CD4-positive, alpha-beta memory T cell (primary cell): ENCODE measurements at regions of chr17 and their contacts with region 1.

Region 1: GRCh38 chr17:7687908-7688807 is at the start of gene WRAP53:
- DNase-seq: peak; percentile 95 to 97 (median 96)
- H3K4me3 ChIP-seq: peak within 1 kb of the TSS; percentile 100
- H3K4me3 Mint-ChIP-seq: peak within 1 kb of the TSS; percentile 93 to 98 (median 96)
- H3K27ac ChIP-seq: peak within 1 kb of the TSS; percentile 99
- H3K27ac Mint-ChIP-seq: peak within 1 kb of the TSS; percentile 98 to 100 (median 99)
- H3K4me1 ChIP-seq: peaks cover 40% of the 10 kb centered on the region
- H3K4me1 Mint-ChIP-seq: peaks cover 18 to 53% (median 40%) of the 10 kb centered on the region in 4 donors
- H3K27me3 ChIP-seq: no peaks in the 10 kb centered on the region
- H3K27me3 Mint-ChIP-seq: no peaks in the 10 kb centered on the region
- total RNA-seq, gene WRAP53: 11.9 to 12.5 TPM

Region 2: DNA sequence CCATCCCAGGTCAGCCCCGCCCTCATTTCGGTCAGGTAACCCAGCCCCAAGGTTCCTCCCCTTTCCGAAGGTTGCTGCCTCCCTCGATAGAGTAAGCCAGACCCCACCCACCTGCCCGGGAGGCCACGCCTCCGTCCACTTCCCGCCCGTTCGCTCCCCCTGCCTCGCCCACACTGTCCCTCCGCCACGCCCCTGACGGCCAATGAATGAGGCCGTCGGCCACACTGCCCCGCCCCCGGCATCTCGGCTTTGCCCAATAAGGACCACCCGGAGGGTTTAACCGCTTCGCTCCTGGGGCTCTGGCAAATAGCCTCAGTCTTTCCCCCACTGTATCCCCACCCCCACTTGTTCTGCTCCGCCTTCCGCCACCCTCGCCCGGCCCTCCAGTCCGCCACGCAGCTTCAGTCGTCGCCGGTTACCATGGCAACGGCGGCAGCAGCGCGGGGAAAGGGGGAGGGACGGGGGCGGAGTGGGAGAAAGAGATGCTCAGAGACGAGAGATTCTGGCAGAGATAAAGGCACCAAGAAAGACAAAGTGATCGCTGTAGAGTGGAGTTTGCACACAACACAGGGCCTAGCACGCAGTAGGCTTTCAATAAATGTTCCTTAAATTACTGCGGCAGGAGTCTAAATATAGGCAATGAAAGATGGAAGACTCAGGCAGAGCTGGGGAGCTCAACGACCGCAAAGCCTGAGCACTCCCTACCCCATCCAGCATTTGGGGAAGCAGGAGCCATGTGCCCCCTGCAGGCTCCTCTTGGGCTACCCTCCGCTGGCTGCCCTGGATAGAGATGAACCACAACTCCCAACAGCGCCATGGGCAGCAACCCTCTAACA is 473.6 kb before region 1 on chr17:
- CTCF ChIA-PET with region 1: no interaction called
- POLR2A ChIA-PET with region 1: no interaction called
- intact Hi-C with region 1: loop called (anchors 1 kb)
- DNase-seq: peak; percentile 97 to 99 (median 98)
- H3K4me3 ChIP-seq: peak overlapping the region; percentile 68 to 73
- H3K4me3 Mint-ChIP-seq: peak overlapping the region; percentile 90 to 98 (median 93)
- H3K27ac ChIP-seq: peak overlapping the region; percentile 96
- H3K27ac Mint-ChIP-seq: peak overlapping the region; percentile 98 to 100 (median 100)
- H3K4me1 ChIP-seq: peaks cover 54% of the 10 kb centered on the region
- H3K4me1 Mint-ChIP-seq: peaks cover 26 to 67% (median 43%) of the 10 kb centered on the region in 4 donors
- H3K27me3 ChIP-seq: no peaks in the 10 kb centered on the region
- H3K27me3 Mint-ChIP-seq: peaks cover 0 to 13% of the 10 kb centered on the region in 2 donors

Region 3: DNA sequence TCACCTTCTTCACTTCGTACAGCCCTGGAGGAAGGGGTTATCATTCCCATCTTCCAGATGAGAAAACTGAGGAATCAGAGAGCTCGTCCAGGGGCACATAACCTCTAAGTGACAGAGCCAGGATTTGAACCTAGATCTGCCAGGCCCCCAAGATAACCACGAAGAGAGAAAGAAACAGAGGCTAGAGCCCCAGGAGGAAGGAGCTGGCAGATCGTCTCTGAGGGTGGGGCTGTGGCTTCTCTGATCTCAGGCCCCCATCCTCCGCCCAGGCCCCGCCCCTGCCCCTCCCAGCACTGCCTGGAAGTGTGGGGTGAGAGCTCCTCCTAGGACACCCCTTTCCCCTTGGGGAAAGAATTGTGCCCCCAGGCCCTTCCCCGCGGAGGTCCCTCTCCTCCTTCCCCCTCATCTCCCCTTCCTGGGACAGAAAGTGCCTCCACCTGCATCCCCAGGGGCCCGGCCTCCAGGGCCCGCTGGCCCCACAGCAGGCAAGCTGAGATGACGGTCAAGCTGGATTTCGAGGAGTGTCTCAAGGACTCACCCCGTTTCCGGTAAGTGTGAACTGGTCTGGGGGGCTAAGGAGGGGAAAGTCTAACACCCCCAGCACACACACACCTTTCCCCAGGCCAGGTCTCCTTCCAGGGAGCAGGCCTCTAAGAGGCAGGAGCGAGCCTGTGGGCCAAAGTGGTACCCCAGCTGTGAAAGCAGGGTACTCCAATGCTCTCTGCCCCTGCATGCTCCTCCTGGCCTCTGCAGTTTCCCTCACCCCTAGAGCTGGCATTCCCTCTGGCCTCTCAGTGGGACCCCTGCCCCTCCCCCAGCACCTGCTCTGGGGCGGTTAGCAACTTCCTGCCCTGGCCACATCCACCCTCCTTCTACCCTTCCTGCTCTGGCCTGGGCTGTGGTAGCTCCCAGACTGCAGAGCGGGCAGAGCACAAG is 351.6 kb before region 1 on chr17 and contains the start of gene ACAP1:
- CTCF ChIA-PET with region 1: interaction called, 5 read pairs
- POLR2A ChIA-PET with region 1: interaction called, 12 read pairs
- intact Hi-C with region 1: no loop called
- DNase-seq: peak; percentile 78 to 90 (median 81)
- H3K4me3 ChIP-seq: peak within 1 kb of the TSS; percentile 94 to 98
- H3K4me3 Mint-ChIP-seq: peak within 1 kb of the TSS; percentile 88 to 99 (median 98)
- H3K27ac ChIP-seq: peak within 1 kb of the TSS; percentile 74
- H3K27ac Mint-ChIP-seq: peak within 1 kb of the TSS; percentile 89 to 99 (median 97)
- H3K4me1 ChIP-seq: peaks cover 81% of the 10 kb centered on the region
- H3K4me1 Mint-ChIP-seq: peaks cover 38 to 75% (median 56%) of the 10 kb centered on the region in 4 donors
- H3K27me3 ChIP-seq: no peaks in the 10 kb centered on the region
- H3K27me3 Mint-ChIP-seq: no peaks in the 10 kb centered on the region
- total RNA-seq, gene ACAP1: 507 to 516 TPM

Region 4: DNA sequence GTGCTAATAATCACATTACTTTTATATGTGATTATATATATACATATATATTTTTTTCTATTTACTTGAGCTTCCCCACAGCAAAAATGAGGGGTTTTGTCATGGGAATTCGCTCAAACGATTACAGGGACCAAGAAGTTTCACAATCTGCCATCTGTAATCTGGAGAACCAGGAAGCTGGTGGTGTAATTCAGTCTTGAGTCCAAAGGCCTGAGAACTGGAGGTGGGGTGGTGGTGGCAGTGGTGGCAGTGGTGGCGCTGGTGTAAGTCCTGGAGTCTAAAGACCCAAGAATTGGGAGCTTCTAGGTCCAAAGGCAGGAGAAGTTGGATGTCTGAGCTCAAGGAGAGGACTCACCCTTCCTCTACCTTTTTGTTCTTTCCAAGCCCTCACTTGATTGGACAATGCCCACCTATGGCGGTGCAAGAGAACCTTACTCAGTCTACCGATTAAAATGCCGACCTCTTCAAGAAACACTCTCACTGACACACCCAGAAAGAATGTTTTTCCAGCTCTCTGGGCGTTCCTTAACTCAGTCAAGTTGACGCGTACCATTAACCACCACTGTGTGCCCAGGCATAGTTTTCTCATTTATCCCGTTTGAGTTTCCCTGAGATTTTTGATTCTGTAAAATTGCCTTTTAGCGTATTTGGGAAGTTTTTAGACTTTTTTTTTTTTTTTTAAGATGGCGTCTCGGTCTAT is 172.1 kb before region 1 on chr17:
- CTCF ChIA-PET with region 1: interaction called, 23 read pairs
- POLR2A ChIA-PET with region 1: interaction called, 8 read pairs
- intact Hi-C with region 1: loop called (anchors 1 kb)
- DNase-seq: no peak
- H3K4me3 ChIP-seq: no peak overlapping the region
- H3K4me3 Mint-ChIP-seq: no peak overlapping the region
- H3K27ac ChIP-seq: no peak overlapping the region
- H3K27ac Mint-ChIP-seq: peak overlapping the region in 4 of 7 donors; percentile 17 to 74 (median 50)
- H3K4me1 ChIP-seq: no peaks in the 10 kb centered on the region
- H3K4me1 Mint-ChIP-seq: peaks cover 0 to 2% (median 0%) of the 10 kb centered on the region in 4 donors
- H3K27me3 ChIP-seq: no peaks in the 10 kb centered on the region
- H3K27me3 Mint-ChIP-seq: no peaks in the 10 kb centered on the region

Region 5: GRCh38 chr17:7614422-7615264 is 73.5 kb before region 1 on chr17 and contains the start of gene FXR2:
- CTCF ChIA-PET with region 1: interaction called, 22 read pairs
- POLR2A ChIA-PET with region 1: interaction called, 105 read pairs
- intact Hi-C with region 1: loop called (anchors 1 kb)
- DNase-seq: peak; percentile 98 to 100 (median 99)
- H3K4me3 ChIP-seq: peak within 1 kb of the TSS; percentile 74 to 78
- H3K4me3 Mint-ChIP-seq: peak within 1 kb of the TSS; percentile 87 to 95 (median 93)
- H3K27ac ChIP-seq: peak within 1 kb of the TSS; percentile 66
- H3K27ac Mint-ChIP-seq: peak within 1 kb of the TSS; percentile 83 to 98 (median 97)
- H3K4me1 ChIP-seq: peaks cover 42% of the 10 kb centered on the region
- H3K4me1 Mint-ChIP-seq: peaks cover 22 to 49% (median 36%) of the 10 kb centered on the region in 4 donors
- H3K27me3 ChIP-seq: no peaks in the 10 kb centered on the region
- H3K27me3 Mint-ChIP-seq: no peaks in the 10 kb centered on the region
- total RNA-seq, gene FXR2: 44.1 to 46.6 TPM

Region 6: DNA sequence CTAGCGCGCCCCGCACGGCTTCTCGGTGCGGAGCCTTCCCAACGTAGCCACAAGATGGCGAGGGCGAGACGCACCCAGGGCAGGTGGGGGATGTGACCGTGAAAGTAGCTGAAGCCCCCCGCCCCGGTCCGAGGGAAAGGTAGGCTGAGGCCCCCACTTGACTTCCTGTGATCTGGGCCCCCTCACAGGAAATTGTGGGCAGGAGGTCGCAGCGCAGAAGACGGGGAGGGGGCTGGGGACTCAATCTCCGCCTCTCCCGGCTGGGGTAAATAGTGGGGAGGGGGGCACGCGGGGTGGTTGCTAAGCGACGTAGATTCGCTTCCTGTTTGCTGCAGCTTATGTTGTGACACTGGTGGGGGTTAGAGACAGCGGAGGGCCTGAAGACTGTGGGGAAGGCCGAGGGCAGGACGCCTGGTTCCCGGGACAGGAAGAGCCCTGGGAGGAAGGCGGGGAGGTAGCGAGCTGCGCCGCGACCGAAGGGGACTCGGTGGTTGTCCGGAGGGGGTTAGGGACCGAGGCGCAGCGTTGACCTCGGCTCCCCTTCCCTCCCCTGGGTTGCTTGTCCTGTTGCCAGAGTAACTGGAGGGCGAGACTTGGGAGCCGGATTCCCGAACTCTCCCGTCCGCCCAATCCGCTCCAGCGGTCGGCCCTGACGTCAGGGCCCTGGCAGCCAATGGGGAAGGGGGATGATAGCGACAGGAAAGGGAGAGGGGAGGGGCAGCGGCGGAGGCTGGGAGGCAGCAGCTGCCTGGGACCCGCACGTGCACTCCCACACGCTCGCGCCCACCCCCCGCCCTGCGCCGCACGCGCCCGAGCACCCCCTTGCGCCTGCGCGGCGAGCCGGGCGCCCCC is 147.0 kb after region 1 on chr17:
- CTCF ChIA-PET with region 1: no interaction called
- POLR2A ChIA-PET with region 1: interaction called, 20 read pairs
- intact Hi-C with region 1: loop called (anchors 5 kb)
- DNase-seq: peak; percentile 90 to 98 (median 92)
- H3K4me3 ChIP-seq: peak overlapping the region; percentile 76 to 84
- H3K4me3 Mint-ChIP-seq: peak overlapping the region; percentile 90 to 98 (median 94)
- H3K27ac ChIP-seq: peak overlapping the region; percentile 98
- H3K27ac Mint-ChIP-seq: peak overlapping the region; percentile 99 to 100 (median 99)
- H3K4me1 ChIP-seq: peaks cover 45% of the 10 kb centered on the region
- H3K4me1 Mint-ChIP-seq: peaks cover 36 to 64% (median 42%) of the 10 kb centered on the region in 4 donors
- H3K27me3 ChIP-seq: no peaks in the 10 kb centered on the region
- H3K27me3 Mint-ChIP-seq: peaks cover 0 to 9% of the 10 kb centered on the region in 2 donors